ENCODE measurements at regions of chr9 and their contacts with region 1.

Region 1: GRCh38 chr9:128771745-128772519 is at the start of gene ZER1:
- DNase-seq: peak; percentile 87 to 92 (median 89)
- H3K4me3 ChIP-seq: peak within 1 kb of the TSS; percentile 70 to 97 (median 90)
- H3K4me3 Mint-ChIP-seq: peak within 1 kb of the TSS; percentile 98
- H3K27ac ChIP-seq: peak within 1 kb of the TSS; percentile 85 to 93
- H3K27ac Mint-ChIP-seq: peak within 1 kb of the TSS; percentile 91 to 96 (median 95)
- H3K4me1 ChIP-seq: peaks cover 8 to 25% of the 10 kb centered on the region in 2 donors
- H3K4me1 Mint-ChIP-seq: peaks cover 26% of the 10 kb centered on the region
- H3K27me3 ChIP-seq: no peaks in the 10 kb centered on the region
- H3K27me3 Mint-ChIP-seq: peaks cover 3 to 4% (median 3%) of the 10 kb centered on the region in 3 donors
- CTCF ChIP-seq: no peak
- polyA plus RNA-seq, gene ZER1: 16.1 to 25.6 (median 18.0) TPM

Region 2: GRCh38 chr9:128438343-128439109 is 333.4 kb before region 1 on chr9:
- intact Hi-C with region 1: no loop called
- DNase-seq: peak; percentile 77 to 85 (median 85)
- H3K4me3 ChIP-seq: no peak overlapping the region
- H3K4me3 Mint-ChIP-seq: no peak overlapping the region
- H3K27ac ChIP-seq: no peak overlapping the region
- H3K27ac Mint-ChIP-seq: peak overlapping the region in 2 of 7 donors; percentile 58 to 81
- H3K4me1 ChIP-seq: peaks cover 0 to 4% of the 10 kb centered on the region in 2 donors
- H3K4me1 Mint-ChIP-seq: peaks cover 6% of the 10 kb centered on the region
- H3K27me3 ChIP-seq: no peaks in the 10 kb centered on the region
- H3K27me3 Mint-ChIP-seq: peaks cover 4 to 5% (median 5%) of the 10 kb centered on the region in 3 donors
- CTCF ChIP-seq: peak; percentile 97

Region 3: GRCh38 chr9:128786681-128787601 is 15.0 kb after region 1 on chr9 and contains the start of gene TBC1D13:
- intact Hi-C with region 1: loop called (anchors 1 to 2 kb)
- DNase-seq: peak; percentile 72 to 80 (median 77)
- H3K4me3 ChIP-seq: peak within 1 kb of the TSS; percentile 89 to 96 (median 92)
- H3K4me3 Mint-ChIP-seq: peak within 1 kb of the TSS; percentile 85 to 89
- H3K27ac ChIP-seq: peak within 1 kb of the TSS; percentile 42 to 85
- H3K27ac Mint-ChIP-seq: peak within 1 kb of the TSS; percentile 72 to 89 (median 85)
- H3K4me1 ChIP-seq: peaks cover 28 to 34% of the 10 kb centered on the region in 2 donors
- H3K4me1 Mint-ChIP-seq: peaks cover 29% of the 10 kb centered on the region
- H3K27me3 ChIP-seq: no peaks in the 10 kb centered on the region
- H3K27me3 Mint-ChIP-seq: no peaks in the 10 kb centered on the region
- CTCF ChIP-seq: no peak
- polyA plus RNA-seq, gene TBC1D13: 9.9 to 16.8 (median 13.8) TPM

Region 4: GRCh38 chr9:128845155-128845931 is 73.4 kb after region 1 on chr9:
- intact Hi-C with region 1: no loop called
- DNase-seq: no peak
- H3K4me3 ChIP-seq: no peak overlapping the region
- H3K4me3 Mint-ChIP-seq: no peak overlapping the region
- H3K27ac ChIP-seq: no peak overlapping the region
- H3K27ac Mint-ChIP-seq: no peak overlapping the region
- H3K4me1 ChIP-seq: no peaks in the 10 kb centered on the region
- H3K4me1 Mint-ChIP-seq: no peaks in the 10 kb centered on the region
- H3K27me3 ChIP-seq: no peaks in the 10 kb centered on the region
- H3K27me3 Mint-ChIP-seq: no peaks in the 10 kb centered on the region
- CTCF ChIP-seq: no peak

Region 5: DNA sequence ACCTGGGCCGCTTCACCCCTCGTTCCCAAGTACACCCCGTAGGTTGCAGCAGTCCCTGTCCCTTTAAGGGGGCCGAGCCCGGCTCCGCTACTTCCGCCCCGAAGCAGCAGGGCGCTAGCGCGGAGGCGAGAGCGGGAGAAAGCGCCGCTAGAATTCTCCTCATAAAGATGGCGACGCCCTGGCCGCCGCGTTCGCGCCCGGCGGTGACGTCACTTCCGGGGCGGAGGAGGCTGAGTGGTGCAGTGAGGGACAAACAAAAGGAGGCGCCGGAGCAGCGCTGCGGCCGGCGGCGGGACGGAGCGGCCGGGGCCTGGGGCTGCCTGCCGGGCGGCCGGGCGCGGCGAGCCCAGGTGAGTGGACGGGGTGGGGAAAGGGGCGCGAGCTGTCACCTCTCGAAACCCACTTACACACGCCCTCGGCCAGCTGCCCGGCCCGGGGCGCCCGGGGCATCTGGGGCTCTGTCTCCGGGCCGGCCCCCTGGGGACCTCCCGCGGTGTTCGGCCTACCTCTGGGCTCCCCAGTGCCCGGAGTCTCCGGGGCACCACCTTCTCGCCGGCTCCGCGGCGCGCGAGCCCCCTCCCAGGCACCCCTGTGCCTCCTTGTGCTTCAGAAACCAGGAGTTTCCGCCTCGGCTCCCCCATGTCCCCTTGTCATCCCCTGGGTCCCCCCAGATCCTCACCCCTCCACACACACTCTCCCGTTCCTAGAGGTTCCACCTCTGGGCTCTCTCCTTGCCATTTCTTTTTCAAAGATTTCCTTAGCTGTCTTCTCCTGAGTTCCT is 110.2 kb after region 1 on chr9 and contains the starts of genes KYAT1 and LRRC8A:
- intact Hi-C with region 1: loop called in 1 of 2 experiments (anchors 5 kb)
- DNase-seq: peak; percentile 94 to 97 (median 95)
- H3K4me3 ChIP-seq: peak within 1 kb of the TSS; percentile 75 to 99 (median 89)
- H3K4me3 Mint-ChIP-seq: peak within 1 kb of the TSS; percentile 94 to 98
- H3K27ac ChIP-seq: peak within 1 kb of the TSS; percentile 27 to 84
- H3K27ac Mint-ChIP-seq: peak within 1 kb of the TSS; percentile 84 to 96 (median 90)
- H3K4me1 ChIP-seq: peaks cover 16 to 21% of the 10 kb centered on the region in 2 donors
- H3K4me1 Mint-ChIP-seq: peaks cover 27% of the 10 kb centered on the region
- H3K27me3 ChIP-seq: no peaks in the 10 kb centered on the region
- H3K27me3 Mint-ChIP-seq: peaks cover 0 to 1% (median 0%) of the 10 kb centered on the region in 3 donors
- CTCF ChIP-seq: no peak
- polyA plus RNA-seq, gene KYAT1: 2.4 to 4.5 (median 3.6) TPM
- polyA plus RNA-seq, gene LRRC8A: 7.8 to 10.8 (median 10.3) TPM

Measured in CD14-positive monocyte (primary cell).